ENCODE measurements at regions of chr1 and their contacts with region 1.

Region 1: GRCh38 chr1:13748610-13749505 is 48.9 kb downstream of the PRDM2 start:
- DNase-seq: peak; percentile 96
- H3K4me3 Mint-ChIP-seq: peak overlapping the region; percentile 86
- H3K27ac Mint-ChIP-seq: peak overlapping the region; percentile 87
- H3K4me1 Mint-ChIP-seq: peaks cover 48% of the 10 kb centered on the region
- H3K27me3 Mint-ChIP-seq: no peaks in the 10 kb centered on the region

Region 2: GRCh38 chr1:13687151-13687715 is 61.6 kb before region 1 on chr1:
- CTCF ChIA-PET with region 1: no interaction called
- POLR2A ChIA-PET with region 1: no interaction called
- DNase-seq: no peak
- H3K4me3 Mint-ChIP-seq: no peak overlapping the region
- H3K27ac Mint-ChIP-seq: no peak overlapping the region
- H3K4me1 Mint-ChIP-seq: no peaks in the 10 kb centered on the region
- H3K27me3 Mint-ChIP-seq: peaks cover 17% of the 10 kb centered on the region

Region 3: DNA sequence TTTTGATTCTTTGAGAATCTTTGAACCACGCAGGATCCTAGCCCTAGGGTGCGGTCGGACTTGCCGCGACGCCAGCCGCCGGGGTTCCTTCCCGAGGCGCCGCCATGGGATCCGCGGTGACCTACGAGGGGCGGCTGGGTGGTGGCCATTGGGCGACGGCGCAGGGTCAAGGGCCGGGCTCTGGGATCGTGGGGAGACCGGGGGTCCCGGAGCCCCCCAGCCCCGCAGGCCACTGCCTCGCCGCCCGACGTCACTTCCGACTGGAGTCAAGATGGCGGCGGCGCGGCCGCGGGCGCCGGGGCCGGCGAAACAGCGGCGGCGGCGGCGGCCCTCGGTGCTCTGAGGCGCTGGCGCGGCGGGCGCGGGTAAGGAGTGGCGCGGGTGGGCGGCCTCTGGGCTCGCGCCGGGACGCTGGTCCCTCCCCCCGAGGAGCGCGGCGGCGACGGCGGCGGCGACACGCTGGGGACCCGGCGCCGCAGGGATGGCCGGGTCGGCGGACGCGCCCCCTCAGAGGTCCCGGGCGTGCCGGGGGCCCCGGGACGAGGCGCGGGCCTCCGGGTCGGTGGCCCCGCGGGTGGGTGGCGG is 48.8 kb before region 1 on chr1 and contains the start of gene PRDM2:
- CTCF ChIA-PET with region 1: interaction called, 7 read pairs
- POLR2A ChIA-PET with region 1: interaction called, 26 read pairs
- DNase-seq: peak; percentile 64
- H3K4me3 Mint-ChIP-seq: peak within 1 kb of the TSS; percentile 94
- H3K27ac Mint-ChIP-seq: peak within 1 kb of the TSS; percentile 95
- H3K4me1 Mint-ChIP-seq: peaks cover 44% of the 10 kb centered on the region
- H3K27me3 Mint-ChIP-seq: peaks cover 2% of the 10 kb centered on the region
- total RNA-seq, gene PRDM2: 56.3 to 58.4 TPM

Region 4: DNA sequence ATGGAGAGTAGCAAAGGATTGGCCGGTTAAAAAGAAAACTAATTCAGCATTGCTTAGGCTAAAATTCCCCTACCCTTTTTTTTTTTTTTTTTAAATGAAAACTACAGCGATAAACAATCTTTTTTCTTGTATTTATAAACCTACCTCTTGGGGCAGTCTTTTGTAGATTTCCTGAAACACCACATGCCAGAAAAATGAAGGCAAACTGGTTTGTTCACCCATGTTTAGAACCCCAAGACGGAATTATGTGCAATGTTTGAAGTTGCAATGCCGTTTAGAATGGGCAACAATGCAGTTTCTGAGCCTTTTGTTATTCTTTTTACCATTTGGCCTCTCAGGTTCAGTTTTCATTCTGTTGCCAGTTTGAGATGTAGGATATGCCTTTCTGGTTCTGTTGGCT is 10.2 kb after region 1 on chr1:
- CTCF ChIA-PET with region 1: interaction called, 4 read pairs
- POLR2A ChIA-PET with region 1: interaction called, 21 read pairs
- DNase-seq: no peak
- H3K4me3 Mint-ChIP-seq: no peak overlapping the region
- H3K27ac Mint-ChIP-seq: no peak overlapping the region
- H3K4me1 Mint-ChIP-seq: peaks cover 60% of the 10 kb centered on the region
- H3K27me3 Mint-ChIP-seq: no peaks in the 10 kb centered on the region

Region 5: GRCh38 chr1:14037101-14037847 is 288.4 kb after region 1 on chr1:
- CTCF ChIA-PET with region 1: no interaction called
- POLR2A ChIA-PET with region 1: no interaction called
- DNase-seq: no peak
- H3K4me3 Mint-ChIP-seq: no peak overlapping the region
- H3K27ac Mint-ChIP-seq: no peak overlapping the region
- H3K4me1 Mint-ChIP-seq: no peaks in the 10 kb centered on the region
- H3K27me3 Mint-ChIP-seq: no peaks in the 10 kb centered on the region

Measured in activated CD4-positive, alpha-beta memory T cell treated with anti-CD3 and anti-CD28 coated beads, Interleukin-2, amount 10 ng/mL, durations not matched to agents 7 days and 5 days (primary cell).